ENCODE measurements at regions of chr16 and their contacts with region 1.

Region 1: GRCh38 chr16:89749647-89750046 is 28.3 kb downstream of the ZNF276 start:
- DNase-seq: peak in 1 of 2 donors; percentile 65
- ATAC-seq: peak; percentile 26
- H3K4me3 ChIP-seq: no peak overlapping the region
- H3K27ac ChIP-seq: no peak overlapping the region
- H3K4me1 ChIP-seq: no peaks in the 10 kb centered on the region
- H3K27me3 ChIP-seq: no peaks in the 10 kb centered on the region

Region 2: GRCh38 chr16:89860747-89861304 is 111.2 kb after region 1 on chr16:
- intact Hi-C with region 1: loop called in 1 of 2 experiments (anchors 5 kb)
- DNase-seq: peak; percentile 66 to 85
- ATAC-seq: peak; percentile 83
- H3K4me3 ChIP-seq: no peak overlapping the region
- H3K27ac ChIP-seq: no peak overlapping the region
- H3K4me1 ChIP-seq: no peaks in the 10 kb centered on the region
- H3K27me3 ChIP-seq: no peaks in the 10 kb centered on the region

Region 3: DNA sequence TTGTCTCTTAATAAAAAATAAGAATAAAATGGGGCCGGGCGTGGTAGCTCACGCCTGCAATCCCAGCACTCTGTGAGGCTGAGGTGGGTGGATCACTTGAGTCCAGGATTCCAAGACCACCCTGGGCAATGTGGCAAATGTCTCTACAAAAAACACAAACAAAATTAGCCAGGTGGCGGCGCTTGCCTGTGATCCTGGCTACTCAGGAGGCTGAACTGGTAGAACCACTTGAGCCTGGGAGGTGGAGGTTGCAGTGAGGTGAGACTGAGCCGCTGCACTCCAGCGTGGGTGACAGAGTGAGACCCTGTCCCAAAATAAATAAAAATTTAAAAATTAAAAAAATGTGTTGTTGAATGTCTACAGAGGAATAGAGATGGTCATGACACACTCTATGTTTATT is 196.0 kb after region 1 on chr16:
- intact Hi-C with region 1: no loop called
- DNase-seq: no peak
- ATAC-seq: no peak
- H3K4me3 ChIP-seq: no peak overlapping the region
- H3K27ac ChIP-seq: no peak overlapping the region
- H3K4me1 ChIP-seq: no peaks in the 10 kb centered on the region
- H3K27me3 ChIP-seq: no peaks in the 10 kb centered on the region